MCF 10A (cell line): ENCODE measurements at regions of chr12 and their contacts with region 1.

Region 1: GRCh38 chr12:12724661-12725545 is 7.7 kb downstream of the CDKN1B start:
- DNase-seq: peak; percentile 97
- H3K4me3 Mint-ChIP-seq: peak overlapping the region; percentile 98
- H3K27ac Mint-ChIP-seq: peak overlapping the region; percentile 99
- H3K4me1 Mint-ChIP-seq: peaks cover 18% of the 10 kb centered on the region
- H3K27me3 Mint-ChIP-seq: no peaks in the 10 kb centered on the region
- CTCF ChIP-seq: no peak

Region 2: GRCh38 chr12:12356886-12357718 is 367.8 kb before region 1 on chr12 and contains the start of gene BORCS5:
- CTCF ChIA-PET with region 1: no interaction called
- POLR2A ChIA-PET with region 1: interaction called, 163 read pairs
- intact Hi-C with region 1: no loop called
- DNase-seq: peak; percentile 98
- H3K4me3 Mint-ChIP-seq: peak within 1 kb of the TSS; percentile 91
- H3K27ac Mint-ChIP-seq: peak within 1 kb of the TSS; percentile 94
- H3K4me1 Mint-ChIP-seq: no peaks in the 10 kb centered on the region
- H3K27me3 Mint-ChIP-seq: no peaks in the 10 kb centered on the region
- CTCF ChIP-seq: no peak
- total RNA-seq, gene BORCS5: 11.0 and 15.3 TPM in 2 replicates

Region 3: DNA sequence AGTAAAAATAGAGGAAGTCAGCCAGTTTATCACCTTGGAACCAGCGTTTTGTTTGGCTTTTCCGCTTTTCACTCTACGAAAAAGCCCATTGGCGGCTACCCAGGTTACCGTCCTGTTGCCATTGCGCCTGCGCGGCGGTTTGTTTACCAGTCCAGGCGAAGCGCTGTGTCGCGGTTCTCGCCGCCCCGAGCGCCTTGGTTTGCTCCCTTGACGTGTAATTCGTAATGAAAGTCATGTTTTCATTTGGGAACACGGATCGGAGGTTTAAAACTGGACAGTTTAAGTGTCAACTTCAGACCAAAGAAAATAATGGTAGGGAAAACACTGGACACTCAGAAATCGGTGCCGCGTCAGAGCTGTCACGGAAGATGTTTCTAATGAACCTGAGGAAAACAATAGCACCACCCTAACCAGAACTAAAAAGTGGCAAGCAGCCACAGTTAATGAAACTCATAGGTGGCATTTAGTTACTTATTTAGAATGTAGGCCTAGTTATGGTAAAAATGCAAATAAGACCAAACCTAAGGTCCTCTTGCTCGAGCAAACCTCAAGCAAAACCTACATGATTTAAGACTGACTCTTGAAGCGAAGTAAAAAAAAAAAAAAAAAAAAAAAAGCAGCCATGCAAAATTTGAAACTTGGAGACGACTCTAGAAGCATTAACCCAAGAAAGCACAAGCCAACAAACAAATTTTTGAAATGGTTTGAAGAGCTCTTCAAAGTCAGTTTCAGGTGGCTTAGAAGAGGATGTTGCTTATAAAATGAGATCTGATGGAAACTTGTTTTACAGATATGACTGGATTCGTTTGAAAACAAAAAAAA is 28.1 kb before region 1 on chr12:
- CTCF ChIA-PET with region 1: no interaction called
- POLR2A ChIA-PET with region 1: interaction called, 19 read pairs
- intact Hi-C with region 1: no loop called
- DNase-seq: peak; percentile 86
- H3K4me3 Mint-ChIP-seq: peak overlapping the region; percentile 88
- H3K27ac Mint-ChIP-seq: peak overlapping the region; percentile 99
- H3K4me1 Mint-ChIP-seq: peaks cover 16% of the 10 kb centered on the region
- H3K27me3 Mint-ChIP-seq: no peaks in the 10 kb centered on the region
- CTCF ChIP-seq: no peak

Region 4: GRCh38 chr12:12736759-12737676 is 12.1 kb after region 1 on chr12:
- CTCF ChIA-PET with region 1: interaction called, 25 read pairs
- POLR2A ChIA-PET with region 1: interaction called, 122 read pairs
- intact Hi-C with region 1: no loop called
- DNase-seq: peak; percentile 55
- H3K4me3 Mint-ChIP-seq: no peak overlapping the region
- H3K27ac Mint-ChIP-seq: peak overlapping the region; percentile 71
- H3K4me1 Mint-ChIP-seq: peaks cover 24% of the 10 kb centered on the region
- H3K27me3 Mint-ChIP-seq: no peaks in the 10 kb centered on the region
- CTCF ChIP-seq: peak; percentile 52

Region 5: DNA sequence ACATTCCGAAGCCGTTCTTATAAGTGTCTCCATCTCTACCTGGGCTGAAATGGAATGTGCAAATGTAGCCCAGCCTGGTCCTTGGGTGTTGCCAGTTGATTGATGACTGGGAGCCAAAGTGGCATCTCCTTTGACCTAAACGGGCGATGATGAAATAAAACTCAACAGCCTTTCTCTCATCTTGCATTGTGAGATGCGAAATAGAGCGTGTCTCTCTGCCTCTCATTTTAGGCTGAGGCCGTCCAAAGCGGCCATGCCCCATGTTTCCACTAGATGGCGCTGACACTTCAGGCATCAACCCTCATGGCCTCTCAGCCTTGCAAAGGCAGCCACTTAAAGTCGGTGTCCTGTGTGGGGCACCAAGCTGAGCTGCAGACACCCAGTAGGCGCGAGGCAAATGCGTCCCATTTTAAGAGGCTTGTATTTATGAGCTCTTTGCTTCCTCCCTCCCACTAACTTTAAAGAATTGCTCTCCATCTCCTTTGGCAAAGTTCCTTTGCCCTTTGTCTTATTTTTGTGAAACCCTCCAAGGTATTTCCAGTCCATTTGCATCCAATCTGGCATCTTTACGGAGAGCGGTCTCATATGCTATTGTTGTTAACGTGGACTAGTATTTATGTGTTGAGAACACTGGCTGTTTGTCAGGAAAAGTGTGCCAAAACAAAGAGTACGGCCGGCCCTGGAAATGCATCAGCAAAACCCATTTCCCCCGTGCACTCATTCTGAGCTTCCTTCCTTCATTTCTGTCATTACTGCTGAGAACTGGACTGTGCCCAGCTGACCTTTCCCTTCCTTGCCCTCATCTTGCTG is 191.4 kb after region 1 on chr12:
- CTCF ChIA-PET with region 1: no interaction called
- POLR2A ChIA-PET with region 1: no interaction called
- intact Hi-C with region 1: no loop called
- DNase-seq: peak; percentile 83
- H3K4me3 Mint-ChIP-seq: no peak overlapping the region
- H3K27ac Mint-ChIP-seq: no peak overlapping the region
- H3K4me1 Mint-ChIP-seq: no peaks in the 10 kb centered on the region
- H3K27me3 Mint-ChIP-seq: no peaks in the 10 kb centered on the region
- CTCF ChIP-seq: peak; percentile 92

Region 6: GRCh38 chr12:12975322-12976077 is 250.6 kb after region 1 on chr12:
- CTCF ChIA-PET with region 1: no interaction called
- POLR2A ChIA-PET with region 1: no interaction called
- intact Hi-C with region 1: no loop called
- DNase-seq: peak; percentile 55
- H3K4me3 Mint-ChIP-seq: no peak overlapping the region
- H3K27ac Mint-ChIP-seq: peak overlapping the region; percentile 85
- H3K4me1 Mint-ChIP-seq: peaks cover 12% of the 10 kb centered on the region
- H3K27me3 Mint-ChIP-seq: no peaks in the 10 kb centered on the region
- CTCF ChIP-seq: peak; percentile 23